Panc1 (cell line): ENCODE measurements at regions of chr7 and their contacts with region 1.

Region 1: DNA sequence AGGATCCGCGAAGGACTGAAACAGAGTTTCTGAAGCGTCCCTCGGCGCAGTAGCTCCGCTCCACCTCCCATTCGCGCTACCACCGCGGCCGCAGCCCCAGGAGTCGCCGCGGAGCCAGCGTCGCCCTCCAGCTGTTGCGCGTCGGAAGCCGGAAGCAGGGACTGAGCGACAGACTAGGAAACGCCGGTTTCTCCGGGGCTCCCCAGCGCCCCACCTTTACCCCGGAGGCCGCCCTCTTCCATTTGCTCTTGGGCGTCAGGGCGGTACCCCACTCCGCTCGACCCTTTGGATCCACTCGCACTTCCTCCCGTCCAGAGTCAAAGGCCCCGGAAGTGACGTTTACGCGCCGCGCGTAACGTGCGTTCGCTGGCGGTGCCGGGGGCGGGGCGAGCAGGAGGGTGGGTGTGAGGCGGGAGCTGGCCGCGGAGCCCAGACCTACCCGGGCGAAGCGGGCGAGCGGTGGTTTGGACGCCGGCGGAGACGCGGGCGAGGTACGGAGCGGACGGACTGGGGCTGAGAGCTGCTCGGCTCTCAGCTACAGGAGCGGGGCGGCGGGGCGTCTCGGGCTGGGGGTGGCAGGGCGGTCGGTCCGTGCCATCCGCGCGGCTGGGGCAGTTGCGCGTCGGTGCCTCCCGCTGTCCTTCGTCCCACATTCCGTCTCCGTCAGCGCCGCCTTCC is at the start of gene RABGEF1:
- DNase-seq: peak; percentile 59
- ATAC-seq: peak; percentile 94
- H3K4me3 ChIP-seq: peak within 1 kb of the TSS; percentile 69 to 71
- H3K27ac ChIP-seq: peak within 1 kb of the TSS; percentile 90
- H3K4me1 ChIP-seq: peaks cover 5% of the 10 kb centered on the region
- H3K27me3 ChIP-seq: no peaks in the 10 kb centered on the region
- CTCF ChIP-seq: no peak
- total RNA-seq, gene RABGEF1: 27.3 TPM

Region 2: DNA sequence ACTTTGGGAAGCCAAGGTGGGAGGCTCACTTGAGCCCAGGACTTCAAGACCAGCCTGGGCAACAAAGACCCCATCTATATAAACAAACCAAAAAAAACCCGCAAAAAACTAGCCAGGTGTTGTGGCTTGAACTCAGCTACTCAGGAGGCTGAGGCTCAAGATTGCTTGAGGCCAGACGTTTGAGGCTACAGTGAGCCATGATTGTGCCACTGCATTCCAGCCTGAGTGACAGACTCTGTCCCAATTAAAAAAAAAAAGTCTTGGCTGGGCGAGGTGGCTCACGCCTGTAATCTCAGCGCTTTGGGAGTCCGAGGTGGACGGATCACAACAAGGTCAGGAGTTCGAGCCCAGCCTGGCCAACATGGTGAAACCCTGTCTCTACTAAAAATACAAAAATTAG is 11.5 kb after region 1 on chr7:
- CTCF ChIA-PET with region 1: interaction called, 12 read pairs
- POLR2A ChIA-PET with region 1: no interaction called
- in situ Hi-C with region 1: no loop called
- intact Hi-C with region 1: no loop called
- DNase-seq: no peak
- ATAC-seq: no peak
- H3K4me3 ChIP-seq: no peak overlapping the region
- H3K27ac ChIP-seq: no peak overlapping the region
- H3K4me1 ChIP-seq: peaks cover 10% of the 10 kb centered on the region; the same call in 1 of the 2 replicates
- H3K27me3 ChIP-seq: no peaks in the 10 kb centered on the region
- CTCF ChIP-seq: no peak

Region 3: DNA sequence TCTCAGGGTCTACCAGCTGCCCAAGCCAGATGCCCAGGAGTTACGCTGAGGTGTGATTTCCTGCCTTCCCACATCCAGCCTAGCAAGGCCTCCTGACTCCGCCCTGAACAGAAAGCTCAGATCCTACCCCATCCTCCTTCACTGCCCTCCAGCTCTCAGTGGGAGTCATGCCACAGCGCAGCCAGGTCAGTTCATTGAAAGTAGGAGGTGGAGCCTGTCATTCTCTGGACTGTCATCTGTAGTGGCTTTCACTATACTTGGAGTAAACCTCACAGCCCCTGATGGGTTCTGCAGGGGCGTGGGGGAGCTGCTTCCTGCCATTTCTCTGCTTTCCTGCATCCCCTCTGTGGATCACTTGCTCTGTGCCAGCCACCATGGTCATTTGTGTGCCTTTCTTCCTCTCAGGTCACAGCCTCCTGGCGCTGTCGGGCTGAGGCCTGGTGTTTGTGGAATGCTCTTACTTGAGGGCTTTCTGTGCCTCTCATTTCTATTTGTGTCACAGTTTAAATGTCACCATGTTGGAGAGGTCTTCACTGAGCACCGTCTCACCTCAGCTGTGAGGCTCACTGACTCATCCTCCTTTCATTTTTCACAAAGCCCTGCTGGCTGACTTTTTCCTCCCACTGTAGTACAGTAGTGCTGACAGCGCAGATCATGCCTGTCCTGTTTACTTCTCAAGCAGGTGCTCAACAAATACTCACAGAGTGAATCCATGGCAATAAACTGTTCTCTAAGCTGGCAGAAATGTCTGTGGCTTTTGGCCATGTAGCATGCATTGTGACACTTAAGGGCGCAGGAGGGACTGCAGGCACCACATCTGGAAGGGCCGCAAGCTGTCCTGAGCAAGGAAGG is 119.6 kb after region 1 on chr7:
- CTCF ChIA-PET with region 1: no interaction called
- POLR2A ChIA-PET with region 1: no interaction called
- in situ Hi-C with region 1: no loop called
- intact Hi-C with region 1: no loop called
- DNase-seq: no peak
- ATAC-seq: peak; percentile 45; the same call in 1 of the 2 replicates
- H3K4me3 ChIP-seq: no peak overlapping the region
- H3K27ac ChIP-seq: no peak overlapping the region
- H3K4me1 ChIP-seq: no peaks in the 10 kb centered on the region
- H3K27me3 ChIP-seq: no peaks in the 10 kb centered on the region
- CTCF ChIP-seq: no peak